ENCODE measurements at regions of chr3 and their contacts with region 1.

Region 1: DNA sequence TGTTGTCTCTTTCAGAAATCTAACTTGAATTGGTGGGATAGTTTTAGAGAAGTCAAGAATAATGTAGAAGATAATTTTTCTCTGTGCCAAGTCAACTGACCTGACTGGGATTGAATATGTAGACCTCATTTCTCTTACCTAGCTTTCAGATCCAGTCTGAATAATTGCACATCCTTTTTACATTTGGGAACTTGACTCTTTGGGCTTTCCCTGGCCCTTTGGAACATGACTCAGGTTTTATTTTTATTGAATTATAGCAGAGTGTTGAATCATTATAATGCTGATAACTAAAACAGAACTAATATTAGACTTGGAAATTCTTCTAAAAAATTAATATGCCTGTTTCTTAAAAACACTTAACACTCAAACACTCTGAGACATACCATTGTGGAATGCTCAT is 76.5 kb downstream of the PFN2 start:
- DNase-seq: no peak
- CTCF ChIP-seq: no peak

Region 2: GRCh38 chr3:149879872-149880271 is 14.3 kb before region 1 on chr3:
- CTCF ChIA-PET with region 1: interaction called, 10 read pairs
- POLR2A ChIA-PET with region 1: no interaction called
- DNase-seq: peak; percentile 10
- CTCF ChIP-seq: peak; percentile 27

Region 3: GRCh38 chr3:149908424-149908957 is 14.3 kb after region 1 on chr3:
- CTCF ChIA-PET with region 1: interaction called, 18 read pairs
- POLR2A ChIA-PET with region 1: no interaction called
- DNase-seq: no peak
- CTCF ChIP-seq: no peak

Region 4: DNA sequence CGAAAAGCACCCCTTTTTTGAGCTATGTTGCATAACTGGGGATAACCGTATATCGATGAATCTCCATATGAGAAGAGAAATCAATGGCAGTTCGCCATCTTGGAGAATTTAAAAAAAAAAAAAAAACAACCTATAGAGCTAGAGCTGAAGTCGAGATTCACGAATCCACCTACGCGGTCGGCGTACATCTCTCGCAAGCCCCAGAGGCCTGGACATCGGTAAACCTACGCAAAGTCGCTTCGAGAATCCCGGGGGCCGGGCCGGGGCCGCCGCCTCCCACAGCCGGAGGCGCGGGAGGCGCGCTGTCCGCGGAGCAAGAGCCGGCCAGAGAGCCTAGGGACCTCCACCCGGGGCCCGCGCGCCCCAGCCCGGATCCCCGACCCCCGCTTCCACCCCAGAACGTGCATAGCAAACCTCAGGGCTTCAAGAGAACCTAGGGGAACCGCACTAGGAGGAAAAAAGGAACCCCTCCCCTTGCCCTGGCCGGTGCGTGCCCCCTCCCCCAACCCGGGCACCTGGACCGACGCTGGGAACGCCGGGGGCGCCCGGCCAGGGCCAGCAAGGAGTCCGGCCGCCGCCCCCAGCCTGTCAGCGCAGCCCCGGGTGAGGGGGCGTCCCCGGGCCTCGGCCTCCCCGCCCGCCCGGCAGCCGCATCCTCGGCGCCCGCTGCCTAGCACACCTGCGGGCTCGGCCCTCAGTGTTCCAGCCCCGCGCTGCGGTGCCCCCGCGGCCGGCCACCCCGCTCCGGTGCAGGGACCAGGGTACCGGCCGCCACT is 75.9 kb after region 1 on chr3:
- CTCF ChIA-PET with region 1: no interaction called
- POLR2A ChIA-PET with region 1: no interaction called
- DNase-seq: peak; percentile 73
- CTCF ChIP-seq: no peak

Region 5: GRCh38 chr3:150015901-150016300 is 121.7 kb after region 1 on chr3:
- CTCF ChIA-PET with region 1: no interaction called
- POLR2A ChIA-PET with region 1: no interaction called
- DNase-seq: no peak
- CTCF ChIP-seq: no peak